Common myeloid progenitor, CD34-positive (primary cell): ENCODE measurements at regions of chr12 and their contacts with region 1.

Region 1: GRCh38 chr12:15584366-15585041 is 204.7 kb downstream of the EPS8 start:
- DNase-seq: peak; percentile 76 to 89 (median 82)
- H3K4me3 ChIP-seq: no peak overlapping the region
- H3K27ac ChIP-seq: no peak overlapping the region
- H3K4me1 ChIP-seq: no peaks in the 10 kb centered on the region
- H3K27me3 ChIP-seq: peaks cover 0 to 3% (median 0%) of the 10 kb centered on the region in 5 experiments

Region 2: DNA sequence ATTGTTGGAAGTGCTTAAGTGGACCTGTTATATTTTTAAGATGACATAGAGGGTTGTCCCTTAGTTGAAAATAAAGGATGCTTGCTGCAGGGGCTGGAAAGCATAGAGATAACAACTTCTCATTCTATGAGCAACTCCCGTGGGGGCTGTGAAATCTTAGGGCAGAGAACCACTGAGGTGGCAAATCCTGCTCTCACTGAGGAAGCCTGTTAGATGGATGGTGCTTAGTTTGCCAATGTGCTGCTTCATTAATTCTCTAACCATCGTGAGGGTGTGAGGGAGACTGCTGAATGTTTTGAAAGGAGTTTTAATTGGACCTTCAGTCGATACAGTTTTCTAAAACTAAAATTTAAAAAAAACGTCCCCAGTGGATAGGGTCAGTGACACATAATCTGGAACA is 215.7 kb before region 1 on chr12:
- CTCF ChIA-PET with region 1: no interaction called
- POLR2A ChIA-PET with region 1: no interaction called
- DNase-seq: no peak
- H3K4me3 ChIP-seq: no peak overlapping the region
- H3K27ac ChIP-seq: no peak overlapping the region
- H3K4me1 ChIP-seq: no peaks in the 10 kb centered on the region
- H3K27me3 ChIP-seq: peaks cover 0 to 11% (median 5%) of the 10 kb centered on the region in 5 experiments

Region 3: DNA sequence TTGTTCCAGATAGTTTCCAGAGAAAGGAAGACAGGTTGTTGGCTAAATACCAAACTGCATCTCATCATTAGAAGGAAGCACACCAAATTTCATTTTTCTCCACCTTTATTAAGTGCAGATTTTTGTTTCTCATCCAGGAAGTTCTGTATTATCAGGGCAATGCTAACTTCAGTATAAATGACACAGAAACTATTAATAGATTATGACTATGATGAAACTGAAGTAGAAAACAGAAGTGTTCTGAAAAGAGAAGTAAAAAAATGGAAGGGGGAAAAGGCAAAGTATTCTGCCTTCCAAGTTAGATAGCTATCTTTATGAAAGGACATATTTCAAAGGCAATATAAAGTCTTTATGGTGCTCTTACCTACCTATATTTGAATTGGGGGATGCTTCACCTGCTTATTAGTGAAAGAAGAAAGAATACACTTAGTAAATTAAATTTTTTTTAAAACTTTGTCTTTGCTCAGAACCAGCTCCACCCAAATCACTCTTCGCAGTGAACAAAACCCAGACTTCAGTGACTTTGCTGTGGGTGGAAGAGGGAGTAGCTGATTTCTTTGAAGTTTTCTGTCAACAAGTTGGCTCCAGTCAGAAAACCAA is 38.3 kb before region 1 on chr12:
- CTCF ChIA-PET with region 1: interaction called, 20 read pairs
- POLR2A ChIA-PET with region 1: no interaction called
- DNase-seq: peak in 2 of 3 donors; percentile 68 to 80
- H3K4me3 ChIP-seq: peak overlapping the region in 1 of 7 experiments; percentile 11
- H3K27ac ChIP-seq: peak overlapping the region in 1 of 2 experiments; percentile 64
- H3K4me1 ChIP-seq: peaks cover 6 to 36% (median 8%) of the 10 kb centered on the region in 4 experiments
- H3K27me3 ChIP-seq: no peaks in the 10 kb centered on the region

Region 4: GRCh38 chr12:15644700-15645099 is 60.2 kb after region 1 on chr12:
- CTCF ChIA-PET with region 1: no interaction called
- POLR2A ChIA-PET with region 1: no interaction called
- DNase-seq: no peak
- H3K4me3 ChIP-seq: no peak overlapping the region
- H3K27ac ChIP-seq: no peak overlapping the region
- H3K4me1 ChIP-seq: no peaks in the 10 kb centered on the region
- H3K27me3 ChIP-seq: no peaks in the 10 kb centered on the region